Right ventricle myocardium inferior (tissue), 1 donor: ENCODE measurements at regions of chr2 and their contacts with region 1.

Region 1: GRCh38 chr2:58762176-58762781 is 521.2 kb upstream of the FANCL start:
- DNase-seq: no peak
- ATAC-seq: no peak

Region 2: GRCh38 chr2:59182249-59182648 is 420.0 kb after region 1 on chr2:
- intact Hi-C with region 1: loop called (anchors 2 kb)
- DNase-seq: no peak
- ATAC-seq: no peak

Region 3: DNA sequence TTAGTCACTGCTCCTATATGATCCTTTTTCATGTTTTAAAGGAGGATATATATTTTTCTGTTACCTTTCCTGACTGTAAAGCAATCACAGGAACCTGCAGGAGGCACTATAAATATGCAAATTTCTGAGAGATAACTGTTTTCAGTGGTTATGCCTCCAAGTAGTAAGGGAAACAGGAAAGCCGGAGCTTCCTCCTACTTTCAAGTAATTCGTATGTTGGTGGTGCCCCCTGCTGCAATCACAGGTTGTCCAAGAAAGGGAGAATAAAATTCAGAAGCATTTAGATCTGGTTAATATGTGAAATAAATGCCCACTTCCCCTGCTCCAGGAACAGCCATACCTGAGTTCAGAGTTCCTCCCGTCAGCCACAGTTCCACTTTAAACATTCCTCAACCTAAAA is 1803.2 kb after region 1 on chr2:
- intact Hi-C with region 1: loop called (anchors 5 kb)
- DNase-seq: no peak
- ATAC-seq: no peak

Region 4: DNA sequence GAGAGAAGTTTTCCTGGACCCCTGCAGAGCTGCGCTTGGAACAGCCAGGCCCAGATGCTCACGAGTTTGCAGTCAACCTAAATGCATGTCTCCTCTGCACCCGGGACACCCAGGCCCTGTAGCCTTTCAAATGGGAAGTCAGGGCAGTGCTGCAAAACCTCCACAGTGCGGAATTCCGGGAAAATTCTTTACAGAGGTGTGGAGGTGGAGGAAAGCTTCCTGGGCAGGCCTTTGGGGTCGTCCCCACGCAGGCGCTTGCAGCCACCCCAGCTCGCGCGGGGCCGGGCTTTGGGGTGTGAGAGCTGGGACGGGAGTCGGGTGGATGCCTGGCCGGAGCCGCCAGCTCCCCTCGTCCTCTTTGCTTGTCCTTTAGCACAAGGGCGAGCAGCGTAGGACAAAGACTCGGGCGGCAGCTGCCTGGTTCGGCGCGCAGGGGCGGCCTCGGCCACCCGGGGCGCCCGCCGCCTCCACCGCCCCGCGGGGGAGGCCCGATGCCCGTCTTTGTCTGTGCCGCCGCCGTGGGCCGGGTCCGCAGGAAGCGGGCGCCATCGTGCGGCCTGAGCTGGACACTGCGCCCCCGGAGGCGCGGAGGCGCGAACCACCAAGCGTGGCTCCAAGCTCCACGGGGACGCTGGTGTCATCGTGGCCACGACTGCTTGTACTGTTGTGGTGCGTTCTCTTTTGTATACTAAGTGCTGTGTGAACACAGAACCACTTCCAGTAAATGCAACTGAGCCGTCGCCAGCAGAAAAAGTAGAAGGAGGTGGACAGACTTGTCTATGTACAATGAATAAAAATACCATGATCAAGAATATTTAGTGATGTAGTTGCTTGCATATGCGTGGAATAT is 1819.4 kb after region 1 on chr2:
- intact Hi-C with region 1: loop called (anchors 5 kb)
- DNase-seq: peak; percentile 90
- ATAC-seq: peak; percentile 88